Heart left ventricle (tissue), 16 donors: ENCODE measurements at regions of chr3 and their contacts with region 1.

Region 1: DNA sequence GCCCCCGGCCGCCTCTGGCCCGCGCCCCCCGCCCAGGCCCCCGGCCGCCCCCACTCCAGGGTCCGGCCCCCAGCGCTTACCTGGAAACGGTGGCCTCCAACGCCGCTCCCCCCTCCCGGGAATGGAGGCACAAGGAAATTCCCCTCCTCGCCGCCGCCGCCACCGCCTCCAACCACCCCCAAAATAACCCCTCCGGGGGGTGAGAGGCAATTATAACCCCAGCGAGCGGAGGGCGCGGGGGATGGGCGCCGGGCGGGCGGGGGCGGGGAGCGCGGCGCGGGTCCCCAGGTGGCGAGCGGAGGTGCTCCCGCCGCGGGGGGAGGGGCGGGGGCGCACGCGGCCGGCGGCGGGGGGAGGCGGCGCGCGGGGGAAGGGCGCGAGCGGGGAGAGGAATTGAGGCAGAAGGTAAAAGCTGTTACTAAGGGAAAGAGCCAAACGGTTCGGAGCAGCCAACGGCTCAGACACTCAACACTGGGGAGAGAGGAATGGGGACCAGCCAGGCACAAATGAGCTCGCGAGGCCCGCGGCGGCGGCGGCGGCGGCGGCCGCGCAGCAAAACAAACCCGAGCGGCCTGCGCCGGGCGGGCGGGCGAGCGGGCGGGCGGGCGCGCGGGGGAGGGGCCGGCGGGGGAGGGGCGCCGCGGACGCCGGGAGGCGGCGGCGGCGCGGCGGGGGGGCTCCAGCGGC is at the start of gene TBL1XR1:
- DNase-seq: peak; percentile 92 to 95 (median 95)
- ATAC-seq: peak; percentile 81 to 92 (median 89)
- H3K4me3 ChIP-seq: peak within 1 kb of the TSS; percentile 72 to 96 (median 90)
- H3K27ac ChIP-seq: peak within 1 kb of the TSS; percentile 96 to 99 (median 98)
- H3K4me1 ChIP-seq: peaks cover 0 to 58% (median 23%) of the 10 kb centered on the region in 12 donors
- H3K27me3 ChIP-seq: no peaks in the 10 kb centered on the region
- CTCF ChIP-seq: no peak
- POLR2A ChIP-seq: no peak
- total RNA-seq, gene TBL1XR1: 50.0 to 176 (median 120) TPM

Region 2: DNA sequence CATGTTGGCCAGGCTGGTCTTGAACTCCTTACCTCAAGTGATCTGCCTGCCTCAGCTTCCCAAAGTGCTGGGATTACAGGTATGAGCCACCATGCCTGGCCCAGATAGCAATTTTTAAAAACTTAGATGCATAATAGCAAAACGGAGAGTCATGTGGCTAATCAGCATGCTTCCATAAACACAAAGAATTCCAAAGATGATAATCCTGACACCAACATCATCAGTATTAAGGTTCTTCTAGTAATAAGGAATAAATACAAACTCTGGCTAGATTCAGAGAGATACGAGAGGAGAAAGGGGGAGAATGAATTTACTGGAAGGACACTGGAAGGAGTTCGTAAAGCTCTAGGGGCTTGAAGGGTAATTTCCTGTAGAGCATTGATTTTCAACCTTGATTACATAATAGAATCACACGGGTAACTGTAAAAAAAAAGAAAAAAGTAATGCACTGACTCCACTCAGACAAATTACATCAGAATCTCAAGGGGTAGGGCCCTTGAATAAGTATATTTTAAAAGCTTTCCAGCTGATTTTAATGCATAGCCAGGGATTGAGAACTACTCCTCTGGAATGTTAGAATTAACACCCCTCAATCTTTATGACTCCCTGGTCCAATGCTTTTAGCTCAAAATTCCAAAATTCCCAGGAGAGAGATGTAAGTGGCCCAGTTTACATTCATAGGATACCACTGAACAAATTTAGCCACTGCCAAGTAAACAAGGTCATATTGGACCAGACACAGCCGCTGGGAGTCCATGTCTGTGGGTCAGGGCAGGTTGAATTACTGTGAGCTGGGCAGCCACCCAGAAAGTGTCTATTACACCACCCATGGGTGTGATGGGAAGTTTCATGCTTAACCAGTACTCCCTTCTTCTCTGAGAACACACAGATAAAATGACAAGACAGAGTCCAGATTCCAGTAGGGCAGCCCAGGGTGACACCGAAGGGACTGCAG is 243.8 kb before region 1 on chr3:
- intact Hi-C with region 1: loop called in 2 of 10 experiments (anchors 5 kb)
- DNase-seq: peak; percentile 72 to 87 (median 79)
- ATAC-seq: peak; percentile 92 to 96 (median 96)
- H3K4me3 ChIP-seq: no peak overlapping the region
- H3K27ac ChIP-seq: peak overlapping the region in 9 of 12 donors; percentile 7 to 81 (median 20)
- H3K4me1 ChIP-seq: peaks cover 0 to 36% (median 7%) of the 10 kb centered on the region in 12 donors
- H3K27me3 ChIP-seq: no peaks in the 10 kb centered on the region
- CTCF ChIP-seq: no peak
- POLR2A ChIP-seq: no peak

Region 3: DNA sequence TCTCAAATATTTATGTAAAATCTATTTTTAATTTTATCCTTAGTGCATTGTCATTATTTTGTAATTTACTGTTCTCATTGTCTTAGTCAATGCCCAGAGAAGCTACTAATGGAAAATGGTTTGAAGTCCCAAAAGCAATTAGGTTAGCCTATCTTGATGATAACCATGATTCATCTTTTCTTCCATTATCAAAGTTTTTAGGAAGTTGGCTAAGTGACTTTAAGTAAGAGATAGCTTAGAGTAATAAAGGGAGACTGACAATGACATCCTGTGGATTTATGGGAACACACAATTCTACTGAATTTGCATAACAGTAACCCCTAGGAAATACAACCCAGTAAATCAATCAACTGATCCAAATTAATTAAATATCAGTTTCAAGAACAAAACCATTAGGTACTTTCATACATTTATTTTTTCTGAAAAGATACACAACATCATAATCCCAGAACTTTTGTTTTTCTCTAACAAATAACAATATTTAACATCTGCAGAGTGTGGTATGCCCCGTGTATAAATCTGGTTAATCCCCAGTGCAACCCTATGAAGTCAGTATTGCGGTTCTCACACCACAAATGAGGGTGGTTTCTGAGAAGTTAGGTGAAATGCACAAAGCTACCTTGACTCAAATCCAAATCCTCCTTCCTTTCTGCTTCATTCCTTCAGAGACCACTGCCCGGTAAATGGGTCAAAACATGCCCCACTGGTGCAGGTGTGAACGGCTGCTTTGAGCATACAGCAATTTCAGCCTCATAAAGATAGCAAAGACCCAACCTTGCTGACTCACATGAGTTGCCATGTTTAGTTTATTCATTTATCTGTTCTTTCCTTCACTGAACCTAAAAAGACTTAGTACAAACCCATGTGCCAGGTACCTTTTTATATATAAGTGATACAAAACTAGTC is 202.1 kb before region 1 on chr3:
- intact Hi-C with region 1: no loop called
- DNase-seq: no peak
- ATAC-seq: no peak
- H3K4me3 ChIP-seq: no peak overlapping the region
- H3K27ac ChIP-seq: no peak overlapping the region
- H3K4me1 ChIP-seq: no peaks in the 10 kb centered on the region
- H3K27me3 ChIP-seq: no peaks in the 10 kb centered on the region
- CTCF ChIP-seq: no peak
- POLR2A ChIP-seq: no peak

Region 4: GRCh38 chr3:177284383-177284881 is 87.2 kb after region 1 on chr3:
- intact Hi-C with region 1: loop called in 1 of 10 experiments (anchors 5 kb)
- DNase-seq: peak in 2 of 5 donors; percentile 16 to 52
- ATAC-seq: peak in 3 of 4 donors; percentile 49 to 77 (median 69)
- H3K4me3 ChIP-seq: no peak overlapping the region
- H3K27ac ChIP-seq: no peak overlapping the region
- H3K4me1 ChIP-seq: peaks cover 0 to 39% (median 6%) of the 10 kb centered on the region in 12 donors
- H3K27me3 ChIP-seq: no peaks in the 10 kb centered on the region
- CTCF ChIP-seq: peak in 2 of 12 donors; percentile 6 to 18
- POLR2A ChIP-seq: no peak

Region 5: DNA sequence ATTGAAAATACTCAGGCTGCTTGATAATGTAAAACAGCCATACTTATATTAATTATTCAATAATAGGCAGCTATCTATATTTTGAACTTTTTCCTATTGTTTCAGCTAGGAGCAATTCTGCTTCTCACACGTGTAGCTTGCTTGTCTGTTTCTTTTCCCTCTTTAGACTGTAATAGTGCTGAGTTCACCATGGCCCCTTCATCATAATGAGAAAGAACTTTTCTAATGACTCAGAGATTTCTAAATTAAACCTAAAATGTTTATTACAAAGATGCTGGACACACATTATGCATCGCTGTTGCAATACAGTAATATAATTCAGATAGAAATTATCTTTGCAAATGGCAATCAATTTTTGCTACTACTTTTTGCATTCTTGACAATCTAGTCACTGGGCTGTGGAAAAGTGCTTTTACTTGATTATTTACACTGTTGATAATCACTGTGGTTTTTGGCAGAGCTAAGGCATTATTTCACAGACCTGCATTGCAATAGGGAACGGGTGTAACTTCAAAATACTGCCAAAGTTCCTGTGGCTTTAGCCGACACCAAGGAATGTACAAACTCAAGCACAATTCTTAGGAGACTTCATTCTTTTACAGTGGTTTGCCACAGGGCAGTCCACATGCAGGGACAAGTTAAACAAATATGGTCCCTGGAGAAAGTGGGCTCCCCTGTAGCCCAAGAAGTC is 281.1 kb after region 1 on chr3:
- intact Hi-C with region 1: loop called in 1 of 10 experiments (anchors 10 kb)
- DNase-seq: peak in 2 of 5 donors; percentile 16 to 40
- ATAC-seq: peak; percentile 78 to 91 (median 87)
- H3K4me3 ChIP-seq: no peak overlapping the region
- H3K27ac ChIP-seq: peak overlapping the region in 10 of 12 donors; percentile 1 to 78 (median 45)
- H3K4me1 ChIP-seq: peaks cover 0 to 28% (median 9%) of the 10 kb centered on the region in 12 donors
- H3K27me3 ChIP-seq: no peaks in the 10 kb centered on the region
- CTCF ChIP-seq: no peak
- POLR2A ChIP-seq: no peak

Region 6: GRCh38 chr3:177646749-177647148 is 449.6 kb after region 1 on chr3:
- intact Hi-C with region 1: no loop called
- DNase-seq: no peak
- ATAC-seq: no peak
- H3K4me3 ChIP-seq: no peak overlapping the region
- H3K27ac ChIP-seq: peak overlapping the region in 1 of 12 donors; percentile 72
- H3K4me1 ChIP-seq: peaks cover 0 to 31% (median 0%) of the 10 kb centered on the region in 12 donors
- H3K27me3 ChIP-seq: no peaks in the 10 kb centered on the region
- CTCF ChIP-seq: no peak
- POLR2A ChIP-seq: no peak

Region 7: DNA sequence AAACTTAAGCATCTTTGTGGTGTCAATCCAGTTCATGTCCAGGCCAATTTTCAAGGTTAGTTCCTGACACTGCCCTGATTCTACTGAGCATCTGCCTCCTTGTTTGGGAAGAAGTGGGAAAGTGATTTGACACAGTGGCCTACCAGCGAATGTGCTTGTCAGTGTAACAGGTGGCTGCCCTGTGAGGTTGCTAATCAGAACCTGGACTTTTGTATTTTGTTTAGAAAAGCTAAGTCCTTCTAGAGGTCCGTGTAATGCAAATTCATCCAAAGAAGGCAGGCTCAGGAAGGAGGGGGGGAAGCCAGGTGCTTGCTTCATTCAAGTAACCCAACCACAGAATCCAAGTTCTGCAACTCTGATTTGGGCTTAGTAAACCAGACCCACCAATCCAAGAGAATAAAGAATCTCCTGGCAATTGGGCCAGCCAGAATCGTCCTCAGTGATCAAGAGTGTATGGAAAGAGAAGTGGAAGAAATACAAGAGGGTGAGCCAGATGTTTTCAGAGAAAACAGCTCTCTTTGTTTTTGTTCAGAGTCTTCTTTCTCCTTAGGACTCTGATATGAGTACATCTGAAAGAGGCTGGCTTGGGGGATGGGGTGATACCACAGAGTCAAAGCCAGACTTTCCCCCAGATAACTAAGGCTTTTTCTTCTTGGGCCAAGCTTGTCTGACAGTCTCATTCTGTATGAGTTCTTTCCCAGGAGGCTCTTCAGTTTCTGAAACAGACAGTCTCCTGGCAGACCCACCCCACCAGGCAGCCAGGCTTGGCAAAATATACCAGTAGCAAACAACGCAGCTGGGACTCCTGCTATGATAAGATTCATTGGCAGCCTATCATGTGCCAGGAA is 509.0 kb after region 1 on chr3:
- intact Hi-C with region 1: loop called in 1 of 10 experiments (anchors 10 kb)
- DNase-seq: peak; percentile 52 to 75 (median 69)
- ATAC-seq: peak; percentile 88 to 97 (median 92)
- H3K4me3 ChIP-seq: no peak overlapping the region
- H3K27ac ChIP-seq: peak overlapping the region; percentile 7 to 76 (median 52)
- H3K4me1 ChIP-seq: peaks cover 0 to 25% (median 13%) of the 10 kb centered on the region in 12 donors
- H3K27me3 ChIP-seq: no peaks in the 10 kb centered on the region
- CTCF ChIP-seq: no peak
- POLR2A ChIP-seq: no peak

Region 8: DNA sequence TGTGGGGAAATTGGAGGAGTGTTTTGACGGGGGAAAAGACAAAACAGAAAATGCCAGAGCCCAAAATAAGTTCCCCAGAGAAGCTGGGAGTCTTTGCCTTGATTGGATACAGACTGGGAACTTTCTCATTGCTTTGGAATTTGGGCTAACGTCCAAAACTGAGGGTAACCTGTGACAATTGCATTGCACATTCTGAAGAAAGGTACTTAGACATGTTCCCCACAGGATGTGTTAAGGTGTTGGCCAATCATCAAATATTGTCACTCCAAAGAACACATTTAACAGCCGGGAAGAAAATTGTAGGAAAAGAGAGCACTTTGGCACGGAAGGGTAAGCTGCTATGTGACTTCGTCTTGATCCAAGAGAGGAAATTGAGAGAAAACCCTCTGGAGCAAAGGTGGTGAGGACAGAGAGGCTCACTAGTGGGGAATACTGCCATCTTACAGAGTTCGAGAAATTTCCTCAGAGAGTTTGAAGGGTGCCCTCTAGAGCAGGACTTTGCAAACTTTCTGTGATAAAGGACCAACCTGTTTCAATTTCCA is 619.6 kb after region 1 on chr3:
- intact Hi-C with region 1: loop called in 1 of 10 experiments (anchors 5 kb)
- DNase-seq: peak in 1 of 5 donors; percentile 23
- ATAC-seq: peak; percentile 47 to 72 (median 61)
- H3K4me3 ChIP-seq: no peak overlapping the region
- H3K27ac ChIP-seq: peak overlapping the region in 10 of 12 donors; percentile 6 to 63 (median 52)
- H3K4me1 ChIP-seq: peaks cover 5 to 52% (median 28%) of the 10 kb centered on the region in 12 donors
- H3K27me3 ChIP-seq: no peaks in the 10 kb centered on the region
- CTCF ChIP-seq: peak in 6 of 12 donors; percentile 13 to 49 (median 36)
- POLR2A ChIP-seq: no peak